ENCODE measurements at regions of chr1 and their contacts with region 1.

Region 1: DNA sequence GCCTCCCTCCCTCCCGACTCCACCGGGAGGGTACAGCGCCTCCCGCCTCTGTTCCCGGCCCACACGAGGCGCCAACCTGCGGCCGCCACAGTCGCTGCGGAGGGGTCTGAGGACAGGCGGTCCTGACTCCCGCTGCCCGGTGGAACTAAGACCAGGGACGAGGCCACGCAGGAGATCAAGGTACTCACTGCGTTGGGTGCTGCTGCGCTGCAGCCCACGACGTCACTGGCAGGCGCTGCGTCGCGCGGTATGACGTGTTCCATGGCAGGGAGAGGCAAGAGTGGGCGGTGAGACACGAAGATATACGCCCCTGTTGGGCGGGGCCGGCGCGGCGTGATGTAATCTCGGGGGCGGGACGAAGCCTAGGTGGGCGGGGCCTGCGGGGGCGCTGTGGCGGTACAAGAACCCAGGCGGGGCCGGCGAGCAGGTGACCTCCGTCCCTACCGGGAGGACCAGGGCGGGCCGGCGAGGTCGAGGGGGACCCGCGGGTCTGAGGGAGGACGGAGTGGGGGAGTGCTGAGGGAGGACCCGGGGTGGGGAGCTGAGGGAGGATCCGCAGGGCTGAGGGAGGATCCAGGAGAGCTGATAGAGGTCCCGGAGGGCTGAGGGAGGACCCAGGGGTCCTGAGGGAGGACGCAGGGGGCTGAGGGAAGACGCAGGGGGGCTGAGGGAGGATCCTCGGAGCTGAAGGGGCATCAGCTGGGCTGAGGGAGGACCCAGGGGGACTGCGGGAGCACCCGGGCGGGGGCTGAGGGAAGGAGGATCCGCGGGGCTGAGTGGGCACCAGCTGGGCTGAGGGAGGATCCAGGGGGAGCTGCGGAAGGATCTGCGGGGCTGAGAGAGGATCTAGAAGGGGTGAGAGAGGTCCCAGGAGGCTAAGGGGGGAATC is at the start of gene MRPL55:
- DNase-seq: peak; percentile 99
- ATAC-seq: peak; percentile 92
- H3K4me3 Mint-ChIP-seq: peak within 1 kb of the TSS; percentile 90
- H3K27ac Mint-ChIP-seq: peak within 1 kb of the TSS; percentile 92
- H3K4me1 Mint-ChIP-seq: peaks cover 21% of the 10 kb centered on the region
- H3K27me3 Mint-ChIP-seq: no peaks in the 10 kb centered on the region
- total RNA-seq, gene MRPL55: 51.0 to 57.7 TPM

Region 2: DNA sequence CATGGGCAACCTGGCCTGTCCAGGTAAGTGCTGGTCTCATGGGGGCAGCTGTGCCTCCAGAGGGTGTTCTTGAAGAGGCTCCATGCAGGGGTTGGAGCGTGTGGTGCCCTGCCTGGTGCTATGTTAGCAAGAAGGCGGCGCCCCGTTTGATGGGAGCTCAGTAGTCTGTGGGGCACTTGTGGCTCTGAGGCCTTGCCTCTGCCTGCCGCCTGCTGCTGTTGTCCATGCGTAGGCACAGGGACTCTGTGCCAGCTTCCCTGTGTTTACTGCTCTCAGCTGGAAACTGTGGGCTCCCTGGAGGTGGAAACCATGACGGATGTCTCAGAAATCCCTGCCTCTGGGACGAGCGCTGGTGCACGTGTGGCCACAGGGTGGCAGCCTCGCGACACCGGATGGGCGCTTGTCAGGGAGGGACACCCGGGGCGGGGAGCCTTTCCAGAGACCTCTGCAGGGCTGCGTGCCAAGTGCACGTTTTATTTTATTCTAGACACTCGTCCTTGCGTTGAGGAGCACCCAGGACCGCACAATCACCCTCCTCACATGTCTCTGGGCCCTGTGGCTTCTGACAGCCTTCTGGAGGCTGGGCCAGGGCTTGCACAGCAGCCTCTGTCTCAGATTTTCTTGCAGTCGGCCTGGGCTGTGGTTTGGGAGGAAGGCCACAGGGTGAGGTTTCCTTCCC is 346.9 kb before region 1 on chr1:
- CTCF ChIA-PET with region 1: no interaction called
- POLR2A ChIA-PET with region 1: no interaction called
- intact Hi-C with region 1: loop called in 1 of 2 experiments (anchors 10 kb)
- DNase-seq: peak; percentile 93
- ATAC-seq: peak; percentile 72
- H3K4me3 Mint-ChIP-seq: no peak overlapping the region
- H3K27ac Mint-ChIP-seq: peak overlapping the region; percentile 8
- H3K4me1 Mint-ChIP-seq: peaks cover 90% of the 10 kb centered on the region
- H3K27me3 Mint-ChIP-seq: no peaks in the 10 kb centered on the region

Region 3: DNA sequence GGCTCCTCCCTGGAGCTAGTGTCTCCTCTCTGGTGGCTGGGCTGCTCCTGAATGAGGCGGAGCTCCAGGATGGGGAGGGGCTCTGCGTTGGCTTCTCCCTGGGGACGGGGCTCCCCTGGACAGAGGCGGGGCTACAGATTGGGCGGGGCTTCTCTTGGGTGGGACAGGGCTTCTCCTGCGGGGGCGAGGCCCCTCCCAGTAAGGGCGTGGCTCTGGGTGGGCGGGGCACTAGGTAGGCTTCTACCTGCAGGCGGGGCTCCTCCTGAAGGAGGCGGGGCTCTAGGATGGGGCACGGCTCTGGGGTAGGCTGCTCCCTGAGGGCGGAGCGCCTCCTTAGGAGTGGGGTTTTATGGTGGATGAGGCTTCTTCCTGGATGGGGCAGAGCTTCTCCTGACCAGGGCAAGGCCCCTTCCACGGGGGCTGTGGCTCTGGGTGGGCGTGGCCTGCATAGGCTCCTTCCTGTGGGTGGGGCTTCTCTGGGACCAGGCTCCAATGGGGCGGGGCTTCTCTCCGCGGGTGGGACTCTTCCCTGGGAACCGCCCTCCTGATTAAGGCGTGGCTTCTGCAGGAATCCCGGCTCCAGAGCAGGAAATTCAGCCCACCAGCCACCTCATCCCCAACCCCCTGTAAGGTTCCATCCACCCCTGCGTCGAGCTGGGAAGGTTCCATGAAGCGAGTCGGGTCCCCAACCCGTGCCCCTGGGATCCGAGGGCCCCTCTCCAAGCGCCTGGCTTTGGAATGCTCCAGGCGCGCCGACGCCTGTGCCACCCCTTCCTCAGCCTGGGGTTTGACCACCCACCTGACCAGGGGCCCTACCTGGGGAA is 49.5 kb before region 1 on chr1:
- CTCF ChIA-PET with region 1: no interaction called
- POLR2A ChIA-PET with region 1: no interaction called
- intact Hi-C with region 1: loop called in 1 of 2 experiments (anchors 1 kb)
- DNase-seq: peak; percentile 91
- ATAC-seq: peak; percentile 85
- H3K4me3 Mint-ChIP-seq: peak overlapping the region; percentile 51
- H3K27ac Mint-ChIP-seq: no peak overlapping the region
- H3K4me1 Mint-ChIP-seq: peaks cover 9% of the 10 kb centered on the region
- H3K27me3 Mint-ChIP-seq: peaks cover 30% of the 10 kb centered on the region

Region 4: DNA sequence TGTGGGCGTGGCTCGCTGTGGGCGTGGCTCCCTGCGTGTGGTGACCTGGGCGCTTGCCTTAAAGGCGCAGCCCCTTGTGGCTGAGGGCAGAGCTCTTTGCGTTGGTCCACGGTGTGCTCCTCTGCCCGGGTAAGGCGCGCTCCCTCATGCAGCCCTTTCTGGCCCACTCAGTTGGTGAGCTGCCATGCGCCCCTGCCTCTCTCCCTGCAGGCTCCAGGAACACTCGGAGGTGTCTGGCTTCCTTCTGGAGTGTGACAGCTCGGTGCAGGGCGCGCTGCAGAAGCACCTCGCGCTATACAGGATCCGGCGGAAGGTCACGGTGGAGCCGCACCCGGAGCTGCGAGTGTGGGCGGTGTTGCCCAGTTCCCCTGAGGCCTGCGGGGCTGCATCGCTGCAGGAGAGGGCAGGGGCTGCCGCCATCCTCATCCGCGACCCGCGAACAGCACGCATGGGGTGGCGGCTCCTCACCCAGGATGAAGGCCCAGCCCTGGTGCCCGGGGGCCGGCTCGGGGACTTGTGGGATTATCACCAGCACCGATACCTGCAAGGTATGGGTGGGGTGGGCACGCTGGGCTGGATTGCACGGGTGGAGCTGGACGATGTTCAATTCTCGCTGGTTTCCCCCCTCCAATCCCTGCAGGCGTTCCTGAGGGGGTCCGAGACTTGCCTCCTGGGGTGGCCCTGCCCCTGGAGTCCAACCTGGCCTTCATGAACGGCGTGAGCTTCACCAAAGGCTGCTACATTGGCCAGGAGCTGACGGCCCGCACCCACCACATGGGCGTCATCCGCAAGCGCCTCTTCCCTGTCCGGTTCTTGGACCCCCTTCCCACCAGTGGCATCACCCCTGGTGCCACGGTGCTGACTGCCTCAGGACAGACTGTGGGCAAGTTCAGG is 65.4 kb after region 1 on chr1:
- CTCF ChIA-PET with region 1: no interaction called
- POLR2A ChIA-PET with region 1: no interaction called
- intact Hi-C with region 1: loop called in 1 of 2 experiments (anchors 1 kb)
- DNase-seq: peak; percentile 59
- ATAC-seq: peak; percentile 67
- H3K4me3 Mint-ChIP-seq: no peak overlapping the region
- H3K27ac Mint-ChIP-seq: no peak overlapping the region
- H3K4me1 Mint-ChIP-seq: no peaks in the 10 kb centered on the region
- H3K27me3 Mint-ChIP-seq: no peaks in the 10 kb centered on the region

Region 5: DNA sequence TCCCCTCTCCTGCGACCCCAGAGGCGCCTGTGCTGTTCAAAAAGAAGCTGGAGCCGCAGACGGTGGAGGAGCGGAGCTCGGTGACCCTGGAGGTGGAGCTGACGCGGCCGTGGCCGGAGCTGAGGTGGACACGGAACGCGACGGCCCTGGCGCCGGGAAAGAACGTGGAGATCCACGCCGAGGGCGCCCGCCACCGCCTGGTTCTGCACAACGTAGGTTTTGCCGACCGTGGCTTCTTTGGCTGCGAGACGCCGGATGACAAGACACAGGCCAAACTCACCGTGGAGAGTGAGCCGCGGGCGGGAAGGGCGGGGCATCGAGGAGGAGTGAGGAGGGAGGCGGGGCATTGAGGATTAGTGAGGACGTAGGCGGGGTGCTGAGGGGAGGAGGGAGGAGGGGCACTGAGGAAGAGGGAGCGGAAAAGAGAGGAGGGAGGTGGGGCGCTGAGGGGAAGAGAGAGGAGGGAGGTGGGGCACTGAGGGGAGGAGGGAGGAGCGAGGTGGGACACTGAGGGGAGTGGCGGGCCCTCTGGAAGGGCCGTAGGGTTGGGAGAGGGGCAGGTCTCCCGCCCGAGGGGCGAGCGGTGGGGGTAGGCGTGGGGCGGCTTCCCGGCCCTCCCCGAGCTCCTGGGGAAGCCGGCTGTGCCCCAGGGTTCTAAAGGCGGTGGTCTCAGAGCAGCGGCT is 166.6 kb after region 1 on chr1:
- CTCF ChIA-PET with region 1: no interaction called
- POLR2A ChIA-PET with region 1: no interaction called
- intact Hi-C with region 1: loop called in 1 of 2 experiments (anchors 1 kb)
- DNase-seq: peak; percentile 94
- ATAC-seq: peak; percentile 96
- H3K4me3 Mint-ChIP-seq: peak overlapping the region; percentile 71
- H3K27ac Mint-ChIP-seq: no peak overlapping the region
- H3K4me1 Mint-ChIP-seq: peaks cover 6% of the 10 kb centered on the region
- H3K27me3 Mint-ChIP-seq: no peaks in the 10 kb centered on the region

Region 6: DNA sequence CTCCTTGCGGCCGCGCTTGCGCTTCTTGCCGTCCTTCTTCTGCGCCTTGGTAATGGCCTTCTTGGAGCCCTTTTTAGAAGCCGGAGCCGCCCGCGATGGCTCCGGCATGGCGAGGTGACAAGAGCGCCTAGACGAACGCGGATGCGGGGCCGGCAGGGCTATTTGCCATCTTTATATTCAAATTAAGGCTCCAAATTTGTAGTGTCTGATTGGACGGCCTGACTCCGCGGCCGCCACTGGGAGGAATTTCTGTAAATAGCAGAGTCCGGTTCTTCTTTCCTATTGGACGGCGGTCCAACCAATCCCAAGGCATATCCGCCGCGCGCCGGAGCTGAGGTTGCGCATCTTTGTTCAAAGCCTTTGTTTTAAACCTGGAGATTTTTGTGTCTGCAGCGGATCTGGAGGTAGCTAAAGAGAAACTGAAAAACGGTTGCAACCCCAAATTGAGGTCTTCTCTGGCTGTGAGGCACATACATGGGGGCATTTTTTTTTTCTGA is 355.2 kb after region 1 on chr1:
- CTCF ChIA-PET with region 1: no interaction called
- POLR2A ChIA-PET with region 1: no interaction called
- intact Hi-C with region 1: loop called in 1 of 2 experiments (anchors 1 kb)
- DNase-seq: peak; percentile 95
- ATAC-seq: peak; percentile 83
- H3K4me3 Mint-ChIP-seq: peak overlapping the region; percentile 84
- H3K27ac Mint-ChIP-seq: peak overlapping the region; percentile 92
- H3K4me1 Mint-ChIP-seq: peaks cover 50% of the 10 kb centered on the region
- H3K27me3 Mint-ChIP-seq: peaks cover 2% of the 10 kb centered on the region